ENCODE measurements at regions of chr1 and their contacts with region 1.

Region 1: DNA sequence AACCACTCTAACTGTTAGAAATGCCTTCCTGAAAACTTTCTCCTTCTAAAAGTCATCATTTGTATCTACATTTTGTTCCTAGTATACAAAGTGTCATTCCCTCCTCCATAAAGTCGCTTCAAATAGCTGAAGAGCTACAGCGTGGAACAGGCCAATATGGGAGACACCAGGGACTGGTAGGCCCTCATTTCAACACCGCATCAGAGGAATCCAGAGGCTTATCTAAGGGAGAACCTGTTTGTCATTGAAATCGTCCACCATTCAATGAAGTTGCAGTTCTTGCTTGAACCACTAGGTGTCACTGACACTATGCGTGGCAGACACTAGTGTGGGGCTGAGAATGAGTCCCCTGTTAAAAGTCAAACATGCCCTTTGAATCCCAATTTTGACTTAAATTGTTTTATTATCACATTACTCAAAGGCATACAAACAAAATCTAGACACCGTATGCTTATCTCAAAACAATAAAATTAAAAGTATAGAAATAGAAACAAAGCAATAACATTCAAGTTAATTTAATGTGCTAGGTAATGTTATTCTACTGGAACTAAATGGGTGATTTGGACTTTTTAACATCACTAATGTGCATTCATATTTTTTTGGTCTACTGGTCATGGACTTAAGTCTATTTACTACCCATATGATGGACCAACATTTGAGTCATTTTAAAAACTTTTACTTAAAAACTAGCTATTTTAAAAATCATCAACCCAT is 182.3 kb downstream of the FCRL5 start:
- DNase-seq: peak; percentile 30
- ATAC-seq: peak; percentile 93
- H3K4me3 ChIP-seq: no peak overlapping the region
- H3K27ac ChIP-seq: no peak overlapping the region
- H3K4me1 ChIP-seq: no peaks in the 10 kb centered on the region
- H3K27me3 ChIP-seq: no peaks in the 10 kb centered on the region
- CTCF ChIP-seq: peak; percentile 68 to 87 (median 83)
- EP300 ChIP-seq: no peak
- POLR2A ChIP-seq: no peak
- RAD21 ChIP-seq: peak; percentile 74

Region 2: DNA sequence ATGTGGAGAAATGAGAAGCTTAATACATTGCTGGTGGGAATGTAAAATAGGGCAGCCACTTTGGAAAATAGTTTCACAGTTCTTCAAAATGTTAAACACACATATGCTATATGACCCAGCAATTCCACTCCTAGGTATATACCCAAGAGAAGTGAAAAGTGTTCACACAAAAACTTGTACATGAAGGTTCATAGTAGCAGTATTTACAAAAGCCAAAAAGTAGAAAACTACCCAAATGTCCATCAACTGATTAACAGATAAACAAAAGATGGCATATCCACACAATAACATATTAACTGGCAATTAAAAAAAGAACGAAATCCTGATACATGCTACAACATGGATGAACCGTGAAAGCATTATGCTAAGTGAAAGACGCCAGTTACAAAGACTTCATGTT is 358.1 kb before region 1 on chr1:
- CTCF ChIA-PET with region 1: no interaction called
- POLR2A ChIA-PET with region 1: no interaction called
- RAD21 ChIA-PET with region 1: no interaction called
- SMC1A ChIA-PET with region 1: no interaction called
- in situ Hi-C with region 1: no loop called
- intact Hi-C with region 1: no loop called
- DNase-seq: no peak
- ATAC-seq: no peak
- H3K4me3 ChIP-seq: no peak overlapping the region
- H3K27ac ChIP-seq: no peak overlapping the region
- H3K4me1 ChIP-seq: no peaks in the 10 kb centered on the region
- H3K27me3 ChIP-seq: no peaks in the 10 kb centered on the region
- CTCF ChIP-seq: no peak
- EP300 ChIP-seq: no peak
- POLR2A ChIP-seq: no peak
- RAD21 ChIP-seq: no peak

Region 3: GRCh38 chr1:157193702-157194391 is 176.1 kb before region 1 on chr1:
- CTCF ChIA-PET with region 1: interaction called, 44 read pairs
- POLR2A ChIA-PET with region 1: no interaction called
- RAD21 ChIA-PET with region 1: interaction called, 23 read pairs
- SMC1A ChIA-PET with region 1: interaction called, 13 read pairs
- in situ Hi-C with region 1: loop called (anchors 5 kb)
- intact Hi-C with region 1: loop called (anchors 5 kb)
- DNase-seq: no peak
- ATAC-seq: peak; percentile 60
- H3K4me3 ChIP-seq: no peak overlapping the region
- H3K27ac ChIP-seq: no peak overlapping the region
- H3K4me1 ChIP-seq: peaks cover 8% of the 10 kb centered on the region; the same call in 1 of the 2 replicates
- H3K27me3 ChIP-seq: no peaks in the 10 kb centered on the region
- CTCF ChIP-seq: peak; percentile 68 to 76 (median 75)
- EP300 ChIP-seq: no peak
- POLR2A ChIP-seq: no peak
- RAD21 ChIP-seq: peak; percentile 65

Region 4: DNA sequence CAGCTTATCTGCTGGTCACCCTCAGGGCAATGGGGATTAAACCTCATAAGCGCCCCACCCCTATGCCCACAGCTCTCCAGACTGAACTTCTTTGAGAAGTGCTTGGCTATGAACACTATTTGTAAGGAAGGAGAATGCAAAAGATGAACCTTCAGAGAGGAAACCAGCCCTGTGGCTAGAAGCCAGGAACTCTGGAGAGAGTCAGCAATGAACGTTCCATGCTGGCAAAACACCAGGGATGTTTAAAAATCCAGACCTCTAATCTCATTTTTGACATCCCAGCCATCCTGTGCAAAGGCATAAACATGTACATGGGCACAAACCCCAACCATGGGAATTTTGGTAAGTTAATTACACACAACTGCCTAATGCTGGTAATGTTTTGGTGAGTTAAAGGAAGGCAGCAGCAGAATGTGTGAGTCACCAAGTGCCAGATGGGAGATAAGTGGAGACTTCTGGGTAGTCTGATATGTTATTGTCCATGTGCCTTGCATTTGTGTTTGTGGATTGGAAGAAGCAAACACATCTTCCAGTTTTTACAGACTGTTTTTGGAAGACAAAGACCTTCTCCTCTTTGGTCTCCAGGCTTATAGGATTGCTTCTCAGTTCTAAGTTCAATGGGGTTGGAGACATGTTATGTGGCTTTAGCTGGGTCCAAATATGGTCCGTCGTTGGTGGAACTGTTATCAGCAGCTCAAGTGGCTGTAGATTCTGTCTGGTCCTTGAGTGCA is 57.7 kb before region 1 on chr1:
- CTCF ChIA-PET with region 1: interaction called, 10 read pairs
- POLR2A ChIA-PET with region 1: no interaction called
- RAD21 ChIA-PET with region 1: interaction called, 4 read pairs
- SMC1A ChIA-PET with region 1: interaction called, 14 read pairs
- in situ Hi-C with region 1: no loop called
- intact Hi-C with region 1: no loop called
- DNase-seq: no peak
- ATAC-seq: no peak
- H3K4me3 ChIP-seq: no peak overlapping the region
- H3K27ac ChIP-seq: no peak overlapping the region
- H3K4me1 ChIP-seq: peaks cover 12% of the 10 kb centered on the region
- H3K27me3 ChIP-seq: no peaks in the 10 kb centered on the region; a peak in 2 of 4 replicates
- CTCF ChIP-seq: no peak
- EP300 ChIP-seq: no peak
- POLR2A ChIP-seq: no peak
- RAD21 ChIP-seq: no peak

Region 5: GRCh38 chr1:157403203-157403602 is 33.2 kb after region 1 on chr1:
- CTCF ChIA-PET with region 1: interaction called, 10 read pairs
- POLR2A ChIA-PET with region 1: no interaction called
- RAD21 ChIA-PET with region 1: interaction called, 3 read pairs
- SMC1A ChIA-PET with region 1: interaction called, 134 read pairs
- in situ Hi-C with region 1: no loop called
- intact Hi-C with region 1: no loop called
- DNase-seq: no peak
- ATAC-seq: peak; percentile 89
- H3K4me3 ChIP-seq: no peak overlapping the region
- H3K27ac ChIP-seq: no peak overlapping the region
- H3K4me1 ChIP-seq: peaks cover 27% of the 10 kb centered on the region
- H3K27me3 ChIP-seq: no peaks in the 10 kb centered on the region; a peak in 1 of 4 replicates
- CTCF ChIP-seq: no peak
- EP300 ChIP-seq: peak; percentile 39 to 65; a peak in 2 of 4 replicates
- POLR2A ChIP-seq: no peak
- RAD21 ChIP-seq: no peak

Region 6: DNA sequence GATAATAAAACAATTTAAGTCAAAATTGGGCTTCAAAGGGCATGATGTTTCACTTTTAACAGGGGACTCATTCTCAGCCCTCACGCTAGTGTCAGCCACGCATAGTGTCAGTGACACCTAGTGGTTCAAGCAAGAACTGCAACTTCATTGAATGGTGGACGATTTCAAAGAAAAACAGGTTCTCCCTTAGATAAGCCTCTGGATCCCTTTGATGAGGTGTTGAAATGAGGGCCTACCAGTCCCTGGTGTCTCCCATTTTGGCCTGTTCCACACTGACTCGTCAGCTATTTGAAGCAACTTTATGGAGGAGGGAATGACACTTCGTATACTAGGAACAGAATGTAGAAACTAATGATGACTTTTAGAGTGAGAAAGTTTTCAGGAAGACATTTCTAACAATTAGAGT is 126.2 kb after region 1 on chr1:
- CTCF ChIA-PET with region 1: interaction called, 38 read pairs
- POLR2A ChIA-PET with region 1: no interaction called
- RAD21 ChIA-PET with region 1: interaction called, 12 read pairs
- SMC1A ChIA-PET with region 1: interaction called, 35 read pairs
- in situ Hi-C with region 1: loop called (anchors 5 kb)
- intact Hi-C with region 1: no loop called
- DNase-seq: no peak
- ATAC-seq: peak; percentile 83
- H3K4me3 ChIP-seq: no peak overlapping the region
- H3K27ac ChIP-seq: no peak overlapping the region
- H3K4me1 ChIP-seq: peaks cover 4% of the 10 kb centered on the region; the same call in 1 of the 2 replicates
- H3K27me3 ChIP-seq: 0 out of 4 replicates have a peak, but pooled peaks cover 0 to 2% of the 10 kb centered on the region in 2 experiments
- CTCF ChIP-seq: peak; percentile 67 to 85 (median 81)
- EP300 ChIP-seq: no peak
- POLR2A ChIP-seq: no peak
- RAD21 ChIP-seq: peak; percentile 63

Region 7: GRCh38 chr1:157562515-157562914 is 192.6 kb after region 1 on chr1:
- CTCF ChIA-PET with region 1: no interaction called
- POLR2A ChIA-PET with region 1: no interaction called
- RAD21 ChIA-PET with region 1: no interaction called
- SMC1A ChIA-PET with region 1: interaction called, 3 read pairs
- in situ Hi-C with region 1: no loop called
- intact Hi-C with region 1: loop called (anchors 10 kb)
- DNase-seq: peak; percentile 63
- ATAC-seq: peak; percentile 83
- H3K4me3 ChIP-seq: peak overlapping the region; percentile 40; the same call in 1 of the 2 replicates
- H3K27ac ChIP-seq: 0 out of 2 replicates have a peak overlapping the region, but pooled peaks have one; percentile 1
- H3K4me1 ChIP-seq: peaks cover 23% of the 10 kb centered on the region
- H3K27me3 ChIP-seq: no peaks in the 10 kb centered on the region
- CTCF ChIP-seq: no peak
- EP300 ChIP-seq: peak; percentile 47 to 83; a peak in 1 of 4 replicates
- POLR2A ChIP-seq: no peak
- RAD21 ChIP-seq: no peak

Region 8: GRCh38 chr1:157715736-157716135 is 345.8 kb after region 1 on chr1:
- CTCF ChIA-PET with region 1: no interaction called
- POLR2A ChIA-PET with region 1: no interaction called
- RAD21 ChIA-PET with region 1: no interaction called
- SMC1A ChIA-PET with region 1: no interaction called
- in situ Hi-C with region 1: no loop called
- intact Hi-C with region 1: no loop called
- DNase-seq: no peak
- ATAC-seq: no peak
- H3K4me3 ChIP-seq: no peak overlapping the region
- H3K27ac ChIP-seq: no peak overlapping the region
- H3K4me1 ChIP-seq: no peaks in the 10 kb centered on the region
- H3K27me3 ChIP-seq: no peaks in the 10 kb centered on the region; a peak in 1 of 4 replicates
- CTCF ChIP-seq: no peak
- EP300 ChIP-seq: no peak
- POLR2A ChIP-seq: no peak
- RAD21 ChIP-seq: no peak

Region 9: GRCh38 chr1:157773493-157774350 is 403.8 kb after region 1 on chr1:
- CTCF ChIA-PET with region 1: no interaction called
- POLR2A ChIA-PET with region 1: no interaction called
- RAD21 ChIA-PET with region 1: no interaction called
- SMC1A ChIA-PET with region 1: no interaction called
- in situ Hi-C with region 1: no loop called
- intact Hi-C with region 1: loop called (anchors 10 kb)
- DNase-seq: no peak
- ATAC-seq: peak; percentile 89
- H3K4me3 ChIP-seq: no peak overlapping the region
- H3K27ac ChIP-seq: no peak overlapping the region
- H3K4me1 ChIP-seq: peaks cover 15% of the 10 kb centered on the region
- H3K27me3 ChIP-seq: peaks cover 3 to 7% of the 10 kb centered on the region in 2 experiments; a peak in 1 of 4 replicates
- CTCF ChIP-seq: peak; percentile 56 to 67 (median 63)
- EP300 ChIP-seq: no peak
- POLR2A ChIP-seq: no peak
- RAD21 ChIP-seq: peak; percentile 89

Region 10: DNA sequence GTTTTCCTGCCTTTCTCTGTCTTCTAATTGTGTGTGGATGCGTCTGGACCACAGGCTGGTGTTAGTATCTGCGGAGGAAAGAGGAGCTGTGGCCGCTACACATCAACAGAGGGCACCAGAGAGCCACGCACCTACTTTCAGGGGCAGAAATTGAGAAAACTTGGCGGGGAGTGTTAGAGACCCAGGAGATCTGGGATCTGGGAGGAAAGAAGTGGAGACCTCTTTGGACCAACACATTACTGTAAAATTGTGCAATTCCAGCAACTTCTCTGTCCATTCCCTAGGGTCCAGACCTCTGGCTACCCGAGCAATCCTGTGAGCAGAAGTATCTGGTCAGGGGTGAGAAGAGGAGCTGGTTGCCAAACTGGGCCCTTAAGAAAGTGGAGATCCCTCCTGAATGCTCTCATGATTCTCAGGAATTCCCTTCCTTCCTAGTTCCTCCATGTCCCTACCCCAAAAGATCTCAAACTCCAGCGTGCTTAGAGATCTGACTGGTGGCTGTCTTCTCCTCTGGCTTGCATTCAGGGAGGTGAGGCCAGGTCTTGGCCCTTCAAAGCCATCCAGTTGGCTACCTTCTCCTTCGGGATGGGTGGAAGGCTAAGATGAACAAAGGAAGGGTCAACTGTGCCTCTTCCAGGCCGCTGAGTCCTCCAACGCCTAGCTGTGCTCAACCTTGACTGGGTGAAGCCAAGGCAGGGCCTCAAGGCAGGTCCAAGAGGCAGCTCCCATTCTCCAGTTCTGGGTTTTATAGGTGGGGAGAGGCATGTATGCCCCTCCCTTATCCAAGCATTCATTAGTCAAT is 622.3 kb after region 1 on chr1:
- CTCF ChIA-PET with region 1: no interaction called
- POLR2A ChIA-PET with region 1: no interaction called
- RAD21 ChIA-PET with region 1: no interaction called
- SMC1A ChIA-PET with region 1: no interaction called
- in situ Hi-C with region 1: no loop called
- intact Hi-C with region 1: no loop called
- DNase-seq: no peak
- ATAC-seq: peak; percentile 83
- H3K4me3 ChIP-seq: no peak overlapping the region
- H3K27ac ChIP-seq: no peak overlapping the region
- H3K4me1 ChIP-seq: no peaks in the 10 kb centered on the region
- H3K27me3 ChIP-seq: peaks cover 6 to 18% of the 10 kb centered on the region in 2 experiments; a peak in 3 of 4 replicates
- CTCF ChIP-seq: peak; percentile 77 to 90 (median 84)
- EP300 ChIP-seq: no peak
- POLR2A ChIP-seq: no peak
- RAD21 ChIP-seq: peak; percentile 75